Transverse colon (tissue), 4 donors: ENCODE measurements at regions of chr11 and their contacts with region 1.

Region 1: GRCh38 chr11:14861680-14862079 is 30.4 kb downstream of the CYP2R1 start:
- DNase-seq: peak; percentile 73
- H3K4me3 ChIP-seq: no peak overlapping the region
- H3K27ac ChIP-seq: peak overlapping the region in 3 of 4 donors; percentile 26 to 45 (median 40)
- H3K4me1 ChIP-seq: peaks cover 0 to 10% (median 2%) of the 10 kb centered on the region in 4 donors
- H3K27me3 ChIP-seq: no peaks in the 10 kb centered on the region
- CTCF ChIP-seq: no peak
- EP300 ChIP-seq: no peak
- POLR2A ChIP-seq: no peak

Region 2: DNA sequence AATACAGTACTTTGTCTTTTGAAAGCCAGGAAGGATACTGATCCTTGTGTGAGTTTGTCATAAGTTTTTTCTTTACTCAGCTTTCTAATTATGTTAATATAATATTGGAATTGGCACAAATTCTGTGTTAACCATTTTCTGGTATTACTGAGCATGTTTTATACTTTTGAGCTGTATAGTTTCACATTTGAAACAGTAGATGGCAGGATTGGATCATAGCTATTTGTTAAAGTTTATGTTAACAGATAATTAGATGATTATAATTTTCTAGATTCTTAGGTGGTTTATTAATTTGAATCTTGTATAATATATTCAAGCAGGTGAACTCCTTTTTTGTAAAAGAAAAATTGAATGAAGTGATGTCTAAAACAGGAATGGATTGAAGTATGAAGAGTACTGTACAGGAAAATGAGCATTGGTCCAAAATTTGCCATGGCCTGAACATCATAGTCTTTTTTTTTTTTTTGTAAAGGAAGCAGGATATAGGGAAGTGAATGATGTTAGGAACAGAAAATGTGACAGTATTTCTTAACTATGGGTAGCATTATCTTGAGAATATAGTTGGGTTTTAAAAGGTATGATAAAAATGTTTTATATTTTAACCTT is 71.7 kb before region 1 on chr11:
- in situ Hi-C with region 1: no loop called
- intact Hi-C with region 1: loop called (anchors 5 kb)
- DNase-seq: no peak
- H3K4me3 ChIP-seq: no peak overlapping the region
- H3K27ac ChIP-seq: no peak overlapping the region
- H3K4me1 ChIP-seq: no peaks in the 10 kb centered on the region
- H3K27me3 ChIP-seq: no peaks in the 10 kb centered on the region
- CTCF ChIP-seq: peak in 4 of 5 experiments; percentile 37 to 46 (median 40)
- EP300 ChIP-seq: no peak
- POLR2A ChIP-seq: no peak